RWPE1 (cell line): ENCODE measurements at regions of chr9 and their contacts with region 1.

Region 1: GRCh38 chr9:133144137-133144903 is 19.4 kb downstream of the GBGT1 start:
- DNase-seq: peak; percentile 91
- H3K27ac ChIP-seq: peak overlapping the region; percentile 94
- CTCF ChIP-seq: peak; percentile 100

Region 2: DNA sequence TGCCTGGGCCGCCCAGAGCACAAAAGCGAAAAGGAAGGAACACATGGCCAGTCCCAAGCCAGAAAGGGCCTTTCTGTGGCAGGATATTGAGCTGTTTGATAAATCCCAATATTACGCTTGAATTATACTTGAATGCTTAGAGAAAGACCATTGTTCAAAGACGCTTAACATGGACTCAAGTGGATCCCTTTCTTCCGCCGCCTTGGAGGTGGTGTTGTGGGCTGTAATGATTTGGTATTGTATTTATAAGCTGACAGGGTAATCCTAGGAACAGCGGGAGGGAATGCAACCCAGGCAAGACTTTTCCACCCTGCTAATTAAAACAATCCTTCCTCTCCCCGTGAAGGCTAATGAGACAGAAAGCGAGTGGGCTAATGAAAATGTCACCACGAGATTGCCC is 709.4 kb before region 1 on chr9:
- CTCF ChIA-PET with region 1: no interaction called
- POLR2A ChIA-PET with region 1: no interaction called
- DNase-seq: no peak
- H3K27ac ChIP-seq: no peak overlapping the region
- CTCF ChIP-seq: no peak

Region 3: DNA sequence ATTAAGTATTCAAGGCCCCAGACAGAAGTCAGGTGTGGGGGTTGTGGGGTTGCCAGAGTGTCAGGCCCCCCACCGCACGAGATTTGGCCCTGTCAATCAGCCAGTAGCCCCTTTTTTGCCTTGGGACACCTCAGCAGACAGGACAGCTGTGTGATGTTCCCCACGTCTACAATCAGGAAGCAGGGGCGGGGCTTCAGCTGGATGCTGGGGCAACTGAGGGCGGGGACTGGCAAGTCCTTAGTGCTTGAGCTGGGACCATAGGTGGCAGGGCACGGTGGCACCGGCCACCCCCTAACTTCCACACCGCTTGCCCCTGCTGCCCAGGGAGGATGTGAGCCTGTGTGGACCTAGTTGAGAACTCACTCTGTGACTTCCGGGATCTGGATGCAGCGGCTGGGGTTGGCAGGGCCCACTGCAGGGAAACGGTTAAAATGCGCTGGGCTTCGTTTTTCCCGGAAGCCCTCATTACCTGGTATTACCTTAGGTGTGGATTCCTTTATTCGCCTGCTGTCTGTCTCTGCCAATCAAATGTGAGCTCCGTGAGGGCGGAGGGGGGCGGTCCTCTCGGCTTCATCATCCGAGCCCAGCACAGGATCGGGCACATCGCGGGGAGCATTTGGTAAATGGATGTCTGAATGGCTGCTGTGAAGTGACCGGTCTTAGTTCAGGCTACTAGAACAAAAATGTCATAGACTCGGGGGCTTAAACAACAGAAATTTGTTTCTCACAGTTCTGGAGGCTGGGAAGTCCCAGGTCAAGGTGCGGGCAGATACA is 121.0 kb before region 1 on chr9:
- CTCF ChIA-PET with region 1: interaction called, 11 read pairs
- POLR2A ChIA-PET with region 1: no interaction called
- DNase-seq: no peak
- H3K27ac ChIP-seq: no peak overlapping the region
- CTCF ChIP-seq: no peak

Region 4: GRCh38 chr9:133041958-133042357 is 102.4 kb before region 1 on chr9:
- CTCF ChIA-PET with region 1: interaction called, 13 read pairs
- POLR2A ChIA-PET with region 1: no interaction called
- DNase-seq: no peak
- H3K27ac ChIP-seq: peak overlapping the region; percentile 5
- CTCF ChIP-seq: no peak

Region 5: DNA sequence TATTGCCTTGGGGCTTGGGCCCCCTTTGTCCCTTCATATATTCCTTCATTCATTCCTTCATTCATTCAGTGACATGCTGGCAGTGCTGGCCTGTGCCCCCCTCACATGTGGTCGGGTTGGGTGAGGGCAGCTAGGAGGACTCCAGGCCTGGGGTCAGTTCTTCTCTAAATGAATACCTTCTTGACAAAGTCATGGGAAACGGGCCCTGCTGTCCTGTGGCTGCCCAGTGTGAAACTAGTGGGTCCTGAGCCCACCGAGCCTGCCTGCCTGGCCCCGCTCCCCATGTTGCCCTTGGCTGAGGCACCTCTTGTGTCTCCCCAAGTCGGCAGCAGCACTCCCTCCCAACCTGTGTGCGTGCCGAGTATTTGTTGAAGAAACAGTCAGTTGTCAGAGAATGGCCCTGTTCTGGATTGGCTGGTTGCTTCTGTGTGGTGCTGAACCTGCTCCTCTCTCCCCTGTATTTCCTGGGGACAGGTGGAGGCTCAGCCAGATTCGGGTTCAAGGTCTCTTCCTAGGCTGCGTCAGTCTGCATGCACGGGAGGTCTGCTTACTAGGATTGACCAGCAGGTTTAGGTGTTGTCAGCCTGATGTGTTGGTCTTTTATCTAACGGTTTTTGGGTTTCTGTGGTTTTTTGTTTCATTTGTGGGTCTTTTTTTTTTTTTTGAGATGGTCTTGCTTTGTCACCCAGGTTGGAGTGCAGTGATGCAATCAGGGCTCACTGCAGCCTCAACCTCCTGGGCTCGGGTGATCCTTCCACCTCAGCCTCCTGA is 85.6 kb before region 1 on chr9:
- CTCF ChIA-PET with region 1: interaction called, 13 read pairs
- POLR2A ChIA-PET with region 1: no interaction called
- DNase-seq: no peak
- H3K27ac ChIP-seq: peak overlapping the region; percentile 97
- CTCF ChIP-seq: no peak

Region 6: GRCh38 chr9:133108794-133109641 is 35.3 kb before region 1 on chr9:
- CTCF ChIA-PET with region 1: interaction called, 71 read pairs
- POLR2A ChIA-PET with region 1: no interaction called
- DNase-seq: no peak
- H3K27ac ChIP-seq: peak overlapping the region; percentile 30
- CTCF ChIP-seq: no peak

Region 7: GRCh38 chr9:133125941-133126702 is 18.2 kb before region 1 on chr9:
- CTCF ChIA-PET with region 1: interaction called, 47 read pairs
- POLR2A ChIA-PET with region 1: interaction called, 3 read pairs
- DNase-seq: no peak
- H3K27ac ChIP-seq: peak overlapping the region; percentile 44
- CTCF ChIP-seq: no peak

Region 8: DNA sequence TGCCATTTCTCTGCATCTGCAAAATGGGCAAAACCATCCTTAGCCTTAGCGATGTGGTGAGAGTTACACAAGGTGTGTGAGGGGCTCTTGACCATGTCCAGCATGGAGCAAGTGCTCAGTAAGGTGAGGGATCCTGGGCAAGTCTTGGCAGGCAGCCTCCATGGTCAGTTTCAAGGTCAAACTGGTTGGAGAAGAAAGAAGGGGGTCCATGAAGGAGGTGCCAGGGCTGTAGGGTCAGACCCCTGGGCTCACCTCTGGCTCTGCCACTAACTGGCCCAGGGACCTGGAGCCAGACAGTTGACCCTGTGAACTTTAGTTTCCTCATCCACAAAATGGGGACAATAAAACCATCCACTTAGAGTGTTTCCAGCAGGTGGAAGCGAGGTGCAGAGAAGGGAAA is 13.1 kb after region 1 on chr9:
- CTCF ChIA-PET with region 1: interaction called, 15 read pairs
- POLR2A ChIA-PET with region 1: no interaction called
- DNase-seq: no peak
- H3K27ac ChIP-seq: no peak overlapping the region
- CTCF ChIP-seq: no peak